ENCODE measurements at regions of chr4 and their contacts with region 1.

Region 1: GRCh38 chr4:163107754-163108153 is 58.9 kb downstream of the NAF1 start:
- DNase-seq: peak in 1 of 2 donors; percentile 15
- H3K4me3 ChIP-seq: no peak overlapping the region
- H3K27ac ChIP-seq: no peak overlapping the region
- H3K4me1 ChIP-seq: no peaks in the 10 kb centered on the region
- H3K27me3 ChIP-seq: no peaks in the 10 kb centered on the region
- CTCF ChIP-seq: no peak
- EP300 ChIP-seq: no peak
- POLR2A ChIP-seq: no peak

Region 2: GRCh38 chr4:163233321-163233720 is 125.6 kb after region 1 on chr4:
- intact Hi-C with region 1: no loop called
- DNase-seq: no peak
- H3K4me3 ChIP-seq: no peak overlapping the region
- H3K27ac ChIP-seq: no peak overlapping the region
- H3K4me1 ChIP-seq: no peaks in the 10 kb centered on the region
- H3K27me3 ChIP-seq: no peaks in the 10 kb centered on the region
- CTCF ChIP-seq: no peak
- EP300 ChIP-seq: no peak
- POLR2A ChIP-seq: no peak

Region 3: GRCh38 chr4:163335384-163335783 is 227.6 kb after region 1 on chr4:
- intact Hi-C with region 1: loop called (anchors 5 kb)
- DNase-seq: no peak
- H3K4me3 ChIP-seq: no peak overlapping the region
- H3K27ac ChIP-seq: no peak overlapping the region
- H3K4me1 ChIP-seq: peaks cover 7 to 27% (median 22%) of the 10 kb centered on the region in 4 donors
- H3K27me3 ChIP-seq: peaks cover 0 to 42% (median 27%) of the 10 kb centered on the region in 3 donors
- CTCF ChIP-seq: no peak
- EP300 ChIP-seq: no peak
- POLR2A ChIP-seq: no peak

Region 4: DNA sequence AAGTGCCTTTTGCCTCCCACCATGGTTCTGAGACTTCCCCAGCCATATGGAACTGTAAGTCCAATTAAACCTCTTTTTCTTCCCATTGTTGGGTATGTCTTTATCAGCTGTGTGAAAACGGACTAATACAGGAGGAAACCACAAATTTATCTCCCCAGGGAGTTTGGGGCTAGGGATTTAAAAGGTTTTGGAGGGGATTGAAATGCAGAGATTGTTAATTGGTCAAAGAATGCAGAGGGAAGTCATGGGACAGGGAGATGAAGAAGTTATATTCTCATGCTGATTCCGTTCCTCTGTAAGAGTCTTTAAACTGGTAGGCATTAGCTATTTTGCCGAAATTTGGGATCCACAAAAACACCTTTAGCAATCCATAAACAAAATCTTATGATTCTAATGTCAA is 307.9 kb after region 1 on chr4:
- intact Hi-C with region 1: no loop called
- DNase-seq: no peak
- H3K4me3 ChIP-seq: no peak overlapping the region
- H3K27ac ChIP-seq: no peak overlapping the region
- H3K4me1 ChIP-seq: no peaks in the 10 kb centered on the region
- H3K27me3 ChIP-seq: no peaks in the 10 kb centered on the region
- CTCF ChIP-seq: no peak
- EP300 ChIP-seq: no peak
- POLR2A ChIP-seq: no peak

Measured in stomach (tissue), 19 donors.